Endothelial cell of umbilical vein (primary cell): ENCODE measurements at regions of chr1 and their contacts with region 1.

Region 1: DNA sequence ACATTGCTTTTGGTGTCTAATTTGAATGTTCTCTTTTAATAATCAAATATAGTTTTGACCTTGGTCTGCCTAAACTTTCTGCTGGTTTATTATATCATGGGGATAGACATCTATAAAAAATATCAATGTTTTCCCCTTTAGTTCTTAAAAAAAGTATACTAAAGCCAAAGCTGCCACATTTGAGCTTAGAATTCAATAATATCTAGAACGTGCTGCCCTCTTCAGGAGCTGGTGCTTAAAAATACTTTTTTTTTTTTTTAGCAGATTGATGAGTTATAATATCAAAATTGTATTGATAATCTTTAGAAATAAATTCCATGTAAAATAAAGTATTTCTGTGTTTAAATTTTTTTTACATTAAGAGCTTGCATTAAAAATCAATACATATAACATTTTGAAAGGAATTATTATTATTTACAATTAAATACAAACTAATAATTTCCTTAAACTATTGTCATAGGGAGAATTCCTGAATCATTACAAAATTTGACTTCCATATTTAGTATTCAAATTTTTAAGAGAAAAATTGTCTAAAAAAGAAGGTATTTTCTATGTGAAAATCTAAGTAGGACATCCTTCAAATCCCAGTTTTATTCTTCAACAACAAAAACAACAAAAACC is 40.1 kb upstream of the ADGRL2 start:
- DNase-seq: peak; percentile 62
- H3K4me3 ChIP-seq: no peak overlapping the region
- H3K27ac ChIP-seq: no peak overlapping the region
- H3K4me1 ChIP-seq: peaks cover 3% of the 10 kb centered on the region
- H3K27me3 ChIP-seq: no peaks in the 10 kb centered on the region
- CTCF ChIP-seq: peak; percentile 7 to 18
- POLR2A ChIP-seq: no peak

Region 2: DNA sequence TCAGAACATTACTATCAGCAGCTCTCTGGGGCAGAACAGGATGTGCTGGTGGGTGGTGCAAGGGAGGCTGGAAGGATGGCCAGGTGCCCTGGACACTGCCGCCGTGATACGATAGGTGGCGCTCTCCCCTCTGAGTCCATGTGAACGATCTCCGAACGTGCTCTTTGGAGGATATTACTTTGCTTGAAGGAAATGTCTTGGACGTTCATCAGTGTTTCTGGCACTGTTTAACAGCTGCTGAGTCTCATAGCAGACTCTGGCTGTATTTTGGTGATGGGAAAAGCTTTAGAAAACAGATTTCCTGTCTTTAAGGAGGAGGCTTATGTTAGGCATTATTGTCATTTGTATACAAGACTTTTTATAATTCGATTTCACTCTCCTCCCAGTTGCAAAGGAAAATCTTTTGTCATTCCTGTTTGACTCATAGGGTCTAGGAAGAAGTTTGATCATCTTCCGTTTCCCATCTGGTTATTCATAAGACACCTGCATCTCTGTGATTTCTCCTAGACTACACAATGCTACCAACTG is 346.0 kb before region 1 on chr1:
- CTCF ChIA-PET with region 1: interaction called, 6 read pairs
- POLR2A ChIA-PET with region 1: no interaction called
- dilution Hi-C with region 1: no loop called
- intact Hi-C with region 1: loop called (anchors 2 kb)
- DNase-seq: peak; percentile 66
- H3K4me3 ChIP-seq: no peak overlapping the region
- H3K27ac ChIP-seq: no peak overlapping the region
- H3K4me1 ChIP-seq: peaks cover 8% of the 10 kb centered on the region
- H3K27me3 ChIP-seq: no peaks in the 10 kb centered on the region
- CTCF ChIP-seq: peak; percentile 80
- POLR2A ChIP-seq: no peak

Region 3: DNA sequence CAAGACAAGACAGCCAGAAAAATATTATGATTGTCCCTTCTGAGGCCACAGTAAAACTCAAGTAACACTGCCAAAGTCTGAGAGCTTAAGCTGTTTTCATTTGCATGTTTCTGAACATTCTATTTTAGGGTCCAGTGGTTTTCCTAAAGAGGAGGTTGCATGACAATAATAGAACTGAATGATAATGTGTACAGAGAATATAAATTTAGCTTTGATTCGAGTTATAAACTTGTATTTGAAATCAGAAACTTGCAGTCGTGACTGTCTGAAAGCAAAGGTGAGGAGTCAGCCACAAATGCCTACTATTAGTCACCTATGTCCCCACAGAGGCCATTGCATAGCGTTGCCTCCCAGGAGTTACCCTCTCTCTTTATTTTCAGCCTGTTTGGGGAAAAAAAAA is 322.9 kb before region 1 on chr1:
- CTCF ChIA-PET with region 1: no interaction called
- POLR2A ChIA-PET with region 1: no interaction called
- dilution Hi-C with region 1: no loop called
- intact Hi-C with region 1: no loop called
- DNase-seq: no peak
- H3K4me3 ChIP-seq: no peak overlapping the region
- H3K27ac ChIP-seq: no peak overlapping the region
- H3K4me1 ChIP-seq: no peaks in the 10 kb centered on the region
- H3K27me3 ChIP-seq: no peaks in the 10 kb centered on the region
- CTCF ChIP-seq: no peak
- POLR2A ChIP-seq: no peak

Region 4: DNA sequence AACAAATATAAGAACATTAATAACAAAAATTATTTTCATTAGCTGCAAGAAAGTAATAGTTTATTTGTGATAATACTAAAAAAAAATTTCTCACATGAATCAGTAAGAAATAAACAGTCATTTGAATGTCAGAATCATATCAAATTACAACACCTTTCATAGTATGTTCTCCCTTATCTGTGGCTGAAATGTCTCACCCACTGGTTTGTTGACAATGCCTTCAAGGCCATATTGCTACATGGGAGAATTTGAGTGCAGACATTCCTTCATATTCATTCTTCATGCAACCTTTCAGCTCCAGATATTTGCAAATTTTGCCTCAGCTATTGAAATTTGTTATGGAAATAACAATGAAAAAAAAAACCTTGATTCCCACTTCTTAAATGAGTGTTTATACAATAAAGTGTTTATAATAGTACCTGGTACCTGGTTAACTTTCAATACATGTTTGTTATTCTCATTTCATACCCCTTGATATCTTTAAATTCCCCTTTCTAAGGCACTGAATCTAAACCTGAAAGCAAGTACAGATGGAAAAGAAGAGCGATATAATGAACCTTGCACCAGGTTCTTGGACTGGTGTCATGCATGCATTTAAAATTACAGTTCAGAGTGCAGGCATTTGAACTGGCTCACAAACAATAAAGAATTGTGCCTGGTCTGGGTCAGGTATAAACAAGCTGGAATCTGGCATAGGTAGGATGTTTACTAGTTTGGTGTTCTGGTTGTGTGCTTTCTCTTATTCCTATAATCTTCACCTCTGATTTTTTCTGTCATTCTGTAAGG is 202.1 kb before region 1 on chr1:
- CTCF ChIA-PET with region 1: interaction called, 201 read pairs
- POLR2A ChIA-PET with region 1: no interaction called
- dilution Hi-C with region 1: no loop called
- intact Hi-C with region 1: no loop called
- DNase-seq: no peak
- H3K4me3 ChIP-seq: no peak overlapping the region
- H3K27ac ChIP-seq: no peak overlapping the region
- H3K4me1 ChIP-seq: no peaks in the 10 kb centered on the region
- H3K27me3 ChIP-seq: no peaks in the 10 kb centered on the region
- CTCF ChIP-seq: no peak
- POLR2A ChIP-seq: no peak

Region 5: GRCh38 chr1:81619156-81619555 is 141.4 kb before region 1 on chr1:
- CTCF ChIA-PET with region 1: no interaction called
- POLR2A ChIA-PET with region 1: no interaction called
- dilution Hi-C with region 1: no loop called
- intact Hi-C with region 1: no loop called
- DNase-seq: no peak
- H3K4me3 ChIP-seq: no peak overlapping the region
- H3K27ac ChIP-seq: no peak overlapping the region
- H3K4me1 ChIP-seq: no peaks in the 10 kb centered on the region
- H3K27me3 ChIP-seq: no peaks in the 10 kb centered on the region
- CTCF ChIP-seq: no peak
- POLR2A ChIP-seq: no peak

Region 6: DNA sequence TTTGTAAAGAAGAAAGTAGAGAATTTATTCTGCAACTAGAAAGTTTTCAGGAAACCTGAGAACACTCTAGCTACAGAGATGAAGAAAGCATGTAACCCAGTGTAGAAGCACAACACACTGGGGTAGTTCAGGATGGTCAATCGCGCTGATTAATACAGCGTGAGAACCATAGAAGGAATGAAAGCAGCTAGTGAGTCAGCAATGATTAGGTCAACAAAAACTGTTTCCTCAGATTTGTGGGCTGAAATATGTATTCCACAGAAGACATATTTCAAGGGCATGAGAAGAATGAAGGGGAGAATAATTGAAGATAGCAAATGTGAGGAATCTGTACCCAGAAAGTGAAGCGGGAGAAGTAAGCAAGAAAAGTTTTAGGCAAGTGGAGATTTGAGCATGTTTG is 57.7 kb before region 1 on chr1:
- CTCF ChIA-PET with region 1: interaction called, 8 read pairs
- POLR2A ChIA-PET with region 1: no interaction called
- dilution Hi-C with region 1: no loop called
- intact Hi-C with region 1: loop called (anchors 1 kb)
- DNase-seq: peak; percentile 96
- H3K4me3 ChIP-seq: peak overlapping the region in 1 of 3 experiments; percentile 23
- H3K27ac ChIP-seq: peak overlapping the region; percentile 100
- H3K4me1 ChIP-seq: peaks cover 42% of the 10 kb centered on the region
- H3K27me3 ChIP-seq: no peaks in the 10 kb centered on the region
- CTCF ChIP-seq: no peak
- POLR2A ChIP-seq: no peak

Region 7: GRCh38 chr1:81876901-81877733 is 116.5 kb after region 1 on chr1:
- CTCF ChIA-PET with region 1: no interaction called
- POLR2A ChIA-PET with region 1: no interaction called
- dilution Hi-C with region 1: no loop called
- intact Hi-C with region 1: no loop called
- DNase-seq: peak; percentile 83
- H3K4me3 ChIP-seq: no peak overlapping the region
- H3K27ac ChIP-seq: peak overlapping the region; percentile 58
- H3K4me1 ChIP-seq: peaks cover 34% of the 10 kb centered on the region
- H3K27me3 ChIP-seq: no peaks in the 10 kb centered on the region
- CTCF ChIP-seq: no peak
- POLR2A ChIP-seq: no peak